H1 (cell line): ENCODE measurements at regions of chr7 and their contacts with region 1.

Region 1: GRCh38 chr7:1123715-1124114 is 35.8 kb downstream of the GPER1 start:
- DNase-seq: peak; percentile 47 to 84
- H3K4me3 ChIP-seq: no peak overlapping the region
- H3K27ac ChIP-seq: no peak overlapping the region
- H3K4me1 ChIP-seq: peaks cover 0 to 14% (median 8%) of the 10 kb centered on the region in 4 experiments; a peak in 6 of 7 replicates
- H3K27me3 ChIP-seq: no peaks in the 10 kb centered on the region
- CTCF ChIP-seq: peak; percentile 71 to 79 (median 71)
- EP300 ChIP-seq: no peak
- POLR2A ChIP-seq: no peak
- RAD21 ChIP-seq: peak; percentile 36 to 56

Region 2: DNA sequence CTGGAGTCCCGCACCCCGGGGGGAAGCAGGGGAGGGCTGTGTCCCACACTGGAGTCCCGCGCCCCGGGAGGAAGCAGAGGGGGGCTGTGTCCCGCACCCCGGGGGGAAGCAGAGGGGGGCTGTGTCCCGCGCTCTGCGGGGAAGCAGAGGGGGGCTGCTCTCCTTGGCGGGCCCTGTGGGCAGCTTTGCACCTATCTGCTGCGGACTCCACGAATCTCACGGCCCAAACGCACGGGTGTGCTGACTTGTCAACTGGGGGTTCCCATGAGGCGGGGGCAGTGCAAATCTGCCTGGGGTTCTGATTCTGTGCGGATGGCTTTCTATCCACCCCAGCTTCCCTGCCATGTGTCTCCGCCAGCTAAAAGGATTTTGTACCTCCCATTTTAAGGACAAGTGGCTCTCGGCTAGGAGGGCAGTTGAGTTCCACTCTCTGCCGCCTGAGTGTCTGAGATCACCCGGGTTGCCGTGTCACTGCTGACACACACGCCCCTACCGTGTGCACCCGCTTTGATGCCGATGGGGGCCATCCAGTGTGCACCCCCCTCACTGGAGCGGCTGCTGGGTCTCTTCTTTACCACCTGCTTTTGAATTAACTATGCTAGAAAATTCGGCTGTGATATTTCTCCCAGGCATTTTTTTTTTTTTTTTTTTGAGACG is 15.3 kb before region 1 on chr7:
- CTCF ChIA-PET with region 1: interaction called, 11 read pairs
- POLR2A ChIA-PET with region 1: no interaction called
- DNase-seq: no peak
- H3K4me3 ChIP-seq: no peak overlapping the region
- H3K27ac ChIP-seq: no peak overlapping the region
- H3K4me1 ChIP-seq: no peaks in the 10 kb centered on the region
- H3K27me3 ChIP-seq: no peaks in the 10 kb centered on the region
- CTCF ChIP-seq: no peak
- EP300 ChIP-seq: no peak
- POLR2A ChIP-seq: no peak
- RAD21 ChIP-seq: no peak

Region 3: GRCh38 chr7:1137510-1138167 is 13.9 kb after region 1 on chr7:
- CTCF ChIA-PET with region 1: interaction called, 14 read pairs
- POLR2A ChIA-PET with region 1: interaction called, 15 read pairs
- DNase-seq: no peak
- H3K4me3 ChIP-seq: peak overlapping the region; percentile 50 to 76 (median 67)
- H3K27ac ChIP-seq: no peak overlapping the region
- H3K4me1 ChIP-seq: peaks cover 0 to 6% (median 2%) of the 10 kb centered on the region in 4 experiments; a peak in 4 of 7 replicates
- H3K27me3 ChIP-seq: no peaks in the 10 kb centered on the region
- CTCF ChIP-seq: no peak
- EP300 ChIP-seq: no peak
- POLR2A ChIP-seq: no peak
- RAD21 ChIP-seq: no peak